Activated CD4-positive, alpha-beta T cell treated with anti-CD3 and anti-CD28 coated beads, Interleukin-2, amount 10 ng/mL, durations not matched to agents 24 days and 14 days (primary cell): ENCODE measurements at regions of chr3 and their contacts with region 1.

Region 1: DNA sequence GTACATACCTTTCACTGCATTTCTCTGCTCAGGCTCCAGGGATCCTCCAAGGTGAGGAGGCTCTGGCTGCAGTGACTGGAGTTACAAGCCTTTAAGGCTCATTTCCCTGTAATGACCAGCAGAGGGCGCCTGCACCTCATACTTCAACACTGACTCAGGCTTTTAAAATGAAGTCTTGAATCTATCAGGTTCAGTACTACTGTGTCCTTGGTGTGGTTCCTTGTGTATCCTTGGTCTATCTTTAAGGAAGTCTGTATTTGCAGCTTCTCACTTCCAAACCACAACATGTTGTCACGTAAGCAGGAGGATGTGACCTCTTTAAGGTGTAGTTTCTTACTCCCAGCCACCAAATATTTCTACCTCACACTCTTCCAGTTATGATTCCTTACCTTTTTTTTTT is 122.5 kb upstream of the ZBED2 start:
- DNase-seq: peak; percentile 87
- H3K4me3 Mint-ChIP-seq: no peak overlapping the region
- H3K27ac Mint-ChIP-seq: no peak overlapping the region
- H3K4me1 Mint-ChIP-seq: peaks cover 5% of the 10 kb centered on the region
- H3K27me3 Mint-ChIP-seq: no peaks in the 10 kb centered on the region

Region 2: DNA sequence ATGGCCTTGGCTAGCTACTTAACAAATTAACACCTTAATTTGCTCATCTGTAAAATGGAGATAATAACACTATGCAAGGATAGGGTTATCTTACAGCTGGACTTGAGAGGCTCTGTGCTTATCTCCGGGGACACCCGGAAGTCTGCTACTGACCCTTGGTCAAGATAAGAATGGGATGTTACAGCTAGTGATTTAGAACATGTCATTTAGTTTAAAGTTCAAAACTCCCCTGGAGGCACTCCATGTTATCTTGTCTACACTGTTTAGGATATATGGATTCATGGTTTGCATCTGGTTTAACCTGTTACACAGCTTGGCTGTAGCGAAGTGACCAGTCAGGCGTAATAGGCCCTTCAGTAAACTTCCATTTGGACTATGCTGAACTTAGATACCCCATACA is 331.6 kb before region 1 on chr3:
- intact Hi-C with region 1: no loop called
- DNase-seq: no peak
- H3K4me3 Mint-ChIP-seq: no peak overlapping the region
- H3K27ac Mint-ChIP-seq: no peak overlapping the region
- H3K4me1 Mint-ChIP-seq: no peaks in the 10 kb centered on the region
- H3K27me3 Mint-ChIP-seq: peaks cover 13% of the 10 kb centered on the region

Region 3: GRCh38 chr3:111668912-111669488 is 48.6 kb before region 1 on chr3:
- intact Hi-C with region 1: loop called (anchors 1 kb)
- DNase-seq: peak; percentile 69
- H3K4me3 Mint-ChIP-seq: peak overlapping the region; percentile 22
- H3K27ac Mint-ChIP-seq: peak overlapping the region; percentile 73
- H3K4me1 Mint-ChIP-seq: peaks cover 69% of the 10 kb centered on the region
- H3K27me3 Mint-ChIP-seq: no peaks in the 10 kb centered on the region

Region 4: DNA sequence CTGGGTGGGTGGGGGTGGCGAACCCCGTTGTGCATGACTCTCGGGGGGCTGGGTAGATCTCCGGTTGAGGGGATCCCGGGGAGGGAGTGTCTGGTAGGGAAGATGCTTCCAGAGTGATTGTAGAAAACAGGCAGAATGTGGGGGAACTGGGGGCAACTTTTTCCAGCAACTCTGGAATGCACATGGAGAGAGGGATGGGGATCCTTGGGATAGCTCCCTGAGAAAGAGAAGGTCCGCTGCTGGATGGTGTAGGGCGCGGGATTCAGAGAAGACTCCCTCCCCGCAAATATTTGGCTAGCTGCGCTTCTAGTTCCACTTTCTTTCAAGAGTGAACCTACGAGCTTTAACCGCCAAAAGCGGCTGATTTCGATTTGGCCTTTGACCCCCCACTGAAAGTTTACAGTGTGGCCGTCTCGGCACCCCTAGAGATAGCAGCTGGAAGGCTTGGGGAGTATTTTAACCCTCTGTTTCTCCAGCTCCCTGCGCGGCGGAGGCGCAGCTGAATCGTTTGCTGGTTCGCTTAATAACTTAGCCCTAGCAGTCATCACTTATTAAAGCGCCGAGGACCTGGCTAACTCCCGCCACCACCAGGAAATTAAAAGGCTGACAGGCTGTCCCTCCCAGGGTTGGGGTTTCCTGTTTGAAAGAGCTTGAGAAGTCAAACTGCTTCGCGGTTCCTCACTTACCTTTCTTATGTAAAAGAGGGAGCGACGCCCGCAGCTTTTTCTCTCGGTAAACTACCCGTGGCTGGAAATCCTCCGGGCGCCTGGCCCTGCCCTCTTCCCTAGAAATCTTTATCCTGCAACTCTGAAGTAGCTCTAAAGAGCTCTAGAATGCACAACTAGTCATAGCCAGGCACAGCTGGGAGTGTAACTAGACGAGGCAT is 142.6 kb after region 1 on chr3:
- intact Hi-C with region 1: loop called (anchors 1 kb)
- DNase-seq: peak; percentile 84
- H3K4me3 Mint-ChIP-seq: peak overlapping the region; percentile 89
- H3K27ac Mint-ChIP-seq: peak overlapping the region; percentile 18
- H3K4me1 Mint-ChIP-seq: peaks cover 21% of the 10 kb centered on the region
- H3K27me3 Mint-ChIP-seq: peaks cover 74% of the 10 kb centered on the region

Region 5: GRCh38 chr3:111967651-111968274 is 250.2 kb after region 1 on chr3:
- intact Hi-C with region 1: loop called (anchors 1 kb)
- DNase-seq: peak; percentile 94
- H3K4me3 Mint-ChIP-seq: no peak overlapping the region
- H3K27ac Mint-ChIP-seq: no peak overlapping the region
- H3K4me1 Mint-ChIP-seq: peaks cover 15% of the 10 kb centered on the region
- H3K27me3 Mint-ChIP-seq: peaks cover 1% of the 10 kb centered on the region

Region 6: DNA sequence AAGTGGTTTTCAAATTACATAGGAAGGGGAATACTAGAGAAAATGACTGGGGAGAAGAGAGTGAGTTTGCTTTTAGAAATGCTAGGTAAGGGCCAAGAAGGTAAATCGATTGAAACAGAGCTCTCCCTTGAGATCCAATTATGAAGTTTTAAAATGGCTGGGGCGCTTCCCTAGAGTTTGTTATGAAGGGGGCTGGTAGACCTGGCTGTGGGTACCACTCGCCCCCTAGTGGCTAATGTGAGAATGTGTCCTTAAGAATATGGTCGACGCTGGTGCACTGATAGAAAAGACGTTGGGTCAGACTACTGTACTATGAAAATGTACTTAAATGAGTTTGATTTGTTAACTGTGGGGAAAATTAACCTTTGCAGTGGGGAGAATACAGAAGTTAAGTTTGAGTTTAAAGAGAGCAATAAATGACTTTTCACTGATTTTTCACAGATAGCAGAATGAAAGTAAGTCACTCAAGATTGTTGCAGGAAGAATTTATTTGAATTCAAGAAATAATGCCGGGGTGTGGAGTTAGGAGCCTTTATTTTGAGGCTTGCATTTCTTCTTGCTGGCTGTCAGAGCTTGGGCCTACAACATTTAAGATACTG is 326.1 kb after region 1 on chr3:
- intact Hi-C with region 1: loop called (anchors 1 kb)
- DNase-seq: peak; percentile 80
- H3K4me3 Mint-ChIP-seq: no peak overlapping the region
- H3K27ac Mint-ChIP-seq: no peak overlapping the region
- H3K4me1 Mint-ChIP-seq: peaks cover 5% of the 10 kb centered on the region
- H3K27me3 Mint-ChIP-seq: peaks cover 6% of the 10 kb centered on the region